Endothelial cell of umbilical vein (primary cell): ENCODE measurements at regions of chr6 and their contacts with region 1.

Region 1: GRCh38 chr6:40999569-40999968 is 39.5 kb downstream of the UNC5CL start:
- DNase-seq: peak; percentile 44
- H3K4me3 ChIP-seq: no peak overlapping the region
- H3K27ac ChIP-seq: no peak overlapping the region
- H3K4me1 ChIP-seq: peaks cover 24% of the 10 kb centered on the region
- H3K27me3 ChIP-seq: peaks cover 0 to 5% of the 10 kb centered on the region in 2 experiments
- CTCF ChIP-seq: peak; percentile 34 to 55
- POLR2A ChIP-seq: no peak

Region 2: DNA sequence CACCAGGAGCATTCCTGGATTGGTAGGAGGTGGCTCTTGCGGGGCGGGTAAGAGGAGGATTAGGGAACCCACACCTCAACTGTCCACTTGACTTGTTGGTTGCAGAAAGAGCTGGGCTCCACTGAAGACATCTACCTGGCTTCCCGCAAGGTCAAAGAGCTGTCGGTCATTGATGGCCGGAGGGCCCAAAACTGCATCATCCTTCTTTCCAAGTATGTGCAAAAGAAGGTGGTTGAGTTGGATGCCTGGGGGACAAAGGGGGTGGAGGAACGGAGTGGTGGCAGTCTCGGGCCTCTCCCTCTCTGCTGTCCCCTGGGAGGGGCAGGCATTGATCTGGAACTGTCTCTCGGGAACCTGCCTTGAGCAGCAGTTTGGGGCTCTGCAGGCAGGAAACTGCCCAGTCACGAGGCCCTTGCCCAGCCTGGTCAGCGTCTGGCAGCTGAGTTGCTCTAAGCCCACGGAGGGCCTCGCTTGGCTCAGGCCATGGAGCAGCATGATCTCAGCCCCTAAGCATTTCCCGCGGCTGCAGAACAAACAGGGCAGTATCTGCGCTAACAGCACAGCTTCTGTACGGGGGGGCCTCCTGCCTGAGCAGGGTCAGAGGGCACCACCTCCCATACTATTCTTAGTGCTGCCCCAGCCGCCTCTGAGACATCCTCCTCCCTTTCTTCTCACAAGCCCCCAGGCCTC is 1112.0 kb before region 1 on chr6:
- CTCF ChIA-PET with region 1: no interaction called
- POLR2A ChIA-PET with region 1: no interaction called
- dilution Hi-C with region 1: no loop called
- intact Hi-C with region 1: loop called (anchors 10 kb)
- DNase-seq: peak; percentile 96
- H3K4me3 ChIP-seq: no peak overlapping the region
- H3K27ac ChIP-seq: peak overlapping the region; percentile 86
- H3K4me1 ChIP-seq: peaks cover 28% of the 10 kb centered on the region
- H3K27me3 ChIP-seq: no peaks in the 10 kb centered on the region
- CTCF ChIP-seq: no peak
- POLR2A ChIP-seq: peak; percentile 38

Region 3: DNA sequence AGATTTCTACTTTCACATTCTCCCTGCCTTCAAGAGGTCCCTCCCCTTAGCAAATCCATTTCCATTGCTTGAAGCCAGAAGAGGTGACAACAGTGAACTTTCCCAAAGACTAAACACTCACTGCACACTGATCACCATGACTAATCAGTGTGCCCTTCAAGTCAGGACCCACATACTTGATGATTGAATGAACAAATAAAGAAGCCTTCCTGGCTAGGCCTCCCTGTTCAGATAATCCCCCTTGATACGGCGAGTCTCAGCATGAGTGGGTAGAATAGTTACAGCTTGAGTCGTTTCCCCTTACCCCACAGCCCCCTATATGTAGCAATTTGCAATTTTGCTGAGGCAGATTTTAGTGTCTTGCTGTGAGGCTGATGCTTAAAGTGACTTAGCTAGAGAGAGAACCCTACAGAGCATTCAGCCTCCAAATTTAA is 62.7 kb before region 1 on chr6:
- CTCF ChIA-PET with region 1: interaction called, 3 read pairs
- POLR2A ChIA-PET with region 1: interaction called, 5 read pairs
- dilution Hi-C with region 1: no loop called
- intact Hi-C with region 1: loop called (anchors 1 kb)
- DNase-seq: peak; percentile 79
- H3K4me3 ChIP-seq: no peak overlapping the region
- H3K27ac ChIP-seq: peak overlapping the region; percentile 7
- H3K4me1 ChIP-seq: peaks cover 6% of the 10 kb centered on the region
- H3K27me3 ChIP-seq: peaks cover 0 to 3% of the 10 kb centered on the region in 2 experiments
- CTCF ChIP-seq: no peak
- POLR2A ChIP-seq: no peak

Region 4: GRCh38 chr6:41072676-41073623 is 73.4 kb after region 1 on chr6 and contains the start of gene NFYA:
- CTCF ChIA-PET with region 1: interaction called, 3 read pairs
- POLR2A ChIA-PET with region 1: interaction called, 3 read pairs
- dilution Hi-C with region 1: no loop called
- intact Hi-C with region 1: loop called (anchors 2 kb)
- DNase-seq: peak; percentile 100
- H3K4me3 ChIP-seq: peak within 1 kb of the TSS; percentile 84 to 97 (median 90)
- H3K27ac ChIP-seq: peak within 1 kb of the TSS; percentile 98
- H3K4me1 ChIP-seq: peaks cover 21% of the 10 kb centered on the region
- H3K27me3 ChIP-seq: no peaks in the 10 kb centered on the region
- CTCF ChIP-seq: peak; percentile 11 to 29
- POLR2A ChIP-seq: peak; percentile 72
- total RNA-seq, gene NFYA: 29.0 and 30.9 TPM in 2 replicates

Region 5: DNA sequence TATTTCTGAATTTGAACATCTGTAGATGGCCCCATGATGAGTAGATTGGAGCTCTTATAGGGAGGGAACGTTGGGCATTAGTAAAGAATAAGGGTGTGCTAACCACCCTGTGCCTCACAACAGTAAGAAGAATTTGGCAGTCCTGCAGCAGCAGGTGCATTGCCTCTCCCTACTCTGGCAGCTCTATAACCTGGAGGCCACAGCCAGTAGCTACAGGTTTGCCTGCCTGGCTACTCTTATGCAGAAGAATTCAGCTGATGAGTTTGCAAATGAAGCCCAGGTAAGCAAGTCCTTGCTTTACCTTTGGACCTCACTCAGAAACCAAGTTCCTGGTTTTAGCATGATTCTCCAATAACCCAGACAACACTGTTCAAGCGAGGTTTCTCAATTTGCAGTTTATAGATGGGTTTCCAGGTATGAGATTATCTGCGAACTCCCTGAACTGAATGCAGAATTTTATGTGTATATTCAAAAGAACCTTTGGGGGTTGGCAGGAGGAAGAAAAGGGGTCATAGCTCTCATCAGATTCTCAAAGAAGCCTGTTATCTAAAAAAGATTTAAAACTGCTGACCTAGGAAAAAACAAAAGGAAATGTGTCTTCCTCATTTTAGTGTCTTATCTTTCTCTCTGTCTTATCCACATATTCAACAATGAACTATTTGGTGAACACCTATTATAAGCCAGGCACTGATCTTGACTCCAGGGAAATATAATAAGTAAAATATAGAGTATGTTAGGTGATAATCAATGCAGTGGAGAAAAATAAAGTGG is 135.7 kb after region 1 on chr6:
- CTCF ChIA-PET with region 1: no interaction called
- POLR2A ChIA-PET with region 1: no interaction called
- dilution Hi-C with region 1: no loop called
- intact Hi-C with region 1: no loop called
- DNase-seq: no peak
- H3K4me3 ChIP-seq: no peak overlapping the region
- H3K27ac ChIP-seq: no peak overlapping the region
- H3K4me1 ChIP-seq: no peaks in the 10 kb centered on the region
- H3K27me3 ChIP-seq: no peaks in the 10 kb centered on the region
- CTCF ChIP-seq: no peak
- POLR2A ChIP-seq: no peak

Region 6: DNA sequence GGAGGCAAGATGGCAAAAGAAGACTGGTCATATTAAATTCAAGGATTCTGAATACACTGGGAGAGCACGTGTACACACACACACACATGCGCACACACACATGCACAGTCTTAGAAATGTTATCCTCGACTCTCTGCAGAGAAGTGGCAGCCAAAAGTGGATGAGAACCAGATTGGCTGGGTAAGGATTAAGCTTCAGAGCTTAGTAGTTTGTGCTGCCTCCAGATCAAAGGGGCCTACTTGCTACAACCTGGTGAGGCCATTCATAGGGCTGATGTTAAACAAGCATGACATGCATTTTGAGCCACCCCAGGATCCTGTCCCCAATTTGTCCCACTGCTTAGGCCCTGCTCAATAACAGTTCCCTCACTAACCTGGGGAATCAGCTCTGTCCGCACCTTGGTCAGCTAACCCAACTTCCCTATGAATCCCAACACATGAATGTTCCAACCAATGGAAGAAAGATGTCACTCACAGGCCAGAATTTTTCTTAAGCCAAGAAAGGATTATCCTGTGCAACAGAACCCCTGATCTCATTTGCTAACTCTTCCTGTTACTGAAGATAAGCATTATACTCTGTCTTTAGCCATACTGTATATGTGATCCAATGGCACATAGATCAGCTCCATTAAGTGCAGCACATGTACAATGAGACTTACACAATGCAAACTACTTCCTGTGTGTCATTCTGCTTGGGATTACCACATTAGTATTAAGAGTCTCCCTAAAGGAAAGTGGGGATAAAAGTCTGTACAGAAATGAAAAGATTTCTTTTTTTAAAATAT is 818.9 kb after region 1 on chr6:
- CTCF ChIA-PET with region 1: no interaction called
- POLR2A ChIA-PET with region 1: no interaction called
- dilution Hi-C with region 1: no loop called
- intact Hi-C with region 1: no loop called
- DNase-seq: peak; percentile 21
- H3K4me3 ChIP-seq: no peak overlapping the region
- H3K27ac ChIP-seq: no peak overlapping the region
- H3K4me1 ChIP-seq: peaks cover 3% of the 10 kb centered on the region
- H3K27me3 ChIP-seq: no peaks in the 10 kb centered on the region
- CTCF ChIP-seq: no peak
- POLR2A ChIP-seq: no peak